Pancreas (tissue), 10 donors: ENCODE measurements at regions of chr15 and their contacts with region 1.

Region 1: DNA sequence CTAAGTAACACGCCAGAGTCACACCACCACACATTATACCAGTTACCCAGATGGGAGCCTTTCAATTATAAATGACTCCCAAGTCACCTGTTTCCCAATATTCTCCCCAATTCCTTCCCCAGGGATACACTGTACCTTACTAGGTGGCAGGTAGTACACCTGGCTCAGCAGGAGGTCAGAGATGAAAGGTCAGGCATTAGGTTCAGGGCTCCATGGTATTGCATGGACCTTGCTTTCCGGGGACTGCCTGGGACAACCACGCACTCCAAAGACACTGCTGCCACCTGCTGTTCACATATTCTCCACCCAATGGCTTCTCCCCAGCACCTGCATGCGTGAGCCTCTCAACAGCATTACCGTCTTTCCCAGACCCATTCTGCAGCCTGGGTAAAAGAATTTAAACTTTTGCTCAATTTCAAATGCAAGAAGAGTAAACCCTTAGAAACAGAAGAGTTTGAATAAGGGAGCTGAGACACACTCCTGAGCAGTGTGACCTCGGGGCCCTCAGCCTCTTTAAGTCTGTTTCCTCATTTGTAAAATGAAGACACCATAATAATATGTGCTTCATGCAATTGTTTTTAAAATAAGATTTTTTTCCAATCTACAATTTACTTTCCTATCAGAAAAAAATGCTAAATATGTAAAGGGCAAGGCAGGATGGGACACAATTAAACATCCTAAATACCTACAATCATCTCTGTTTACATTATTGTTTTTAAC is 28.0 kb upstream of the LACTB start:
- DNase-seq: peak; percentile 67 to 87 (median 78)
- ATAC-seq: peak; percentile 96 to 100 (median 100)
- H3K4me3 ChIP-seq: no peak overlapping the region
- H3K27ac ChIP-seq: no peak overlapping the region
- H3K4me1 ChIP-seq: peaks cover 0 to 3% (median 0%) of the 10 kb centered on the region in 3 donors
- H3K27me3 ChIP-seq: no peaks in the 10 kb centered on the region
- CTCF ChIP-seq: peak; percentile 60 to 81 (median 78)

Region 2: DNA sequence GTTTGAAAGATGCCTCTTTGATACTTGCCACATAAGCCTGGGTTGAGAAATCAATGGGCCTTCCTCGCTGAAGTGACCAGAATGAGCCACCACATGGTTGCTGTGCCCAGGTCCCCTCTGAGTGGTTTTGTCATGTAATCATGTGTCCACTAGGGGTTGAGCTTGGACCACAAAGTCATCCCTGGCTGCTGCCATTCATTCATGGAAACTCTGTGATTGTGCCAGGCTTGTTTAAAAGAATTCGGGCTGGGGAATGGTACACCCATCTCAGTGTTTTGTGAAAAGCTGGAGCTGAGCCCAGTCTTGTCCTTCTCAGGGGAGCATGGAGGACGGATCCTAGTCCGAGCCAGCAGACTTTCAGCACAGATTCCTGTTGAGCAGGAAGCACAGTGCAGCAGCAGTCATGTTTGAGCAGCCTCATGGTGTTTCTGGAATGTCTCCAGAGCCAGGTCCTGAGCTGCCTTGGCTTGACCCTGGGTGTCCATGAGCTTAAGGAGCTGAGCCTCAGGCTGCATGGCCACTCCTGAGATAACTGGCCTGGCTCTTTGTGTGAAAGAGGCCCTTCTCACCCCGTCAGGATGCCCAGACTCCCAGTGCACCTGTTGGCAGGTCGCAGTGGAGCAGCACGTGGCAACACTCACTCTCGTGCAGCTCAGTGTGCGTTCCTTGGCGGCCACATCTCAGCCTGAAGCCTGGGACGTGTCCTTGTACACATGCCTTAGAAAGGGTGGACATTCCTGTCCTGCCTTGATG is 311.4 kb before region 1 on chr15:
- intact Hi-C with region 1: loop called in 2 of 3 experiments (anchors 5 to 10 kb)
- DNase-seq: peak; percentile 65 to 85 (median 76)
- ATAC-seq: peak; percentile 89 to 95 (median 94)
- H3K4me3 ChIP-seq: no peak overlapping the region
- H3K27ac ChIP-seq: peak overlapping the region; percentile 23 to 66 (median 54)
- H3K4me1 ChIP-seq: peaks cover 0 to 6% (median 0%) of the 10 kb centered on the region in 3 donors
- H3K27me3 ChIP-seq: no peaks in the 10 kb centered on the region
- CTCF ChIP-seq: peak in 3 of 4 donors; percentile 48 to 68 (median 65)